Aorta (tissue), 5 donors: ENCODE measurements at regions of chr2 and their contacts with region 1.

Region 1: GRCh38 chr2:223169830-223170605 is 118.0 kb downstream of the KCNE4 start:
- DNase-seq: no peak
- ATAC-seq: no peak
- H3K4me3 ChIP-seq: no peak overlapping the region
- H3K27ac ChIP-seq: no peak overlapping the region
- H3K4me1 ChIP-seq: no peaks in the 10 kb centered on the region
- H3K27me3 ChIP-seq: no peaks in the 10 kb centered on the region

Region 2: DNA sequence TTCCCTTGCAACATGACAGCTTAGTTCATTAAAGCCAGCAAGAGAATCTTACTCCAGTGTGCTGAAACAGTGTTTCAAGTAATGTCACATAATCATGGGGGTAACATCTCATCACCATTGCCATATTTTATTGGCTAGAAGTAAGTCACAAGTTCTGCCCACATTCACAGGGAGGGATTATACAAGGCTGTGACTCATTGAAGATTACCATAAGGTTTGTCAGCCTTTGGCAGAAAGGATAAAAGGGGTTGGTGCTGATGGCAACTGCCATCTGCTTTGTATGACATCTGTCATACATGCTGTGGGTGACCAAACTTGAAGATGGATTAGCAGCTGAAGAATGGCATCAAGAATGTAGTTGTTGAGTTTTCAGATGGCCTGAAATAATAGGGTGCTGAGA is 56.9 kb before region 1 on chr2:
- intact Hi-C with region 1: loop called in 1 of 2 experiments (anchors 10 kb)
- DNase-seq: no peak
- ATAC-seq: no peak
- H3K4me3 ChIP-seq: no peak overlapping the region
- H3K27ac ChIP-seq: no peak overlapping the region
- H3K4me1 ChIP-seq: no peaks in the 10 kb centered on the region
- H3K27me3 ChIP-seq: no peaks in the 10 kb centered on the region